SK-N-SH (cell line): ENCODE measurements at regions of chr17 and their contacts with region 1.

Region 1: DNA sequence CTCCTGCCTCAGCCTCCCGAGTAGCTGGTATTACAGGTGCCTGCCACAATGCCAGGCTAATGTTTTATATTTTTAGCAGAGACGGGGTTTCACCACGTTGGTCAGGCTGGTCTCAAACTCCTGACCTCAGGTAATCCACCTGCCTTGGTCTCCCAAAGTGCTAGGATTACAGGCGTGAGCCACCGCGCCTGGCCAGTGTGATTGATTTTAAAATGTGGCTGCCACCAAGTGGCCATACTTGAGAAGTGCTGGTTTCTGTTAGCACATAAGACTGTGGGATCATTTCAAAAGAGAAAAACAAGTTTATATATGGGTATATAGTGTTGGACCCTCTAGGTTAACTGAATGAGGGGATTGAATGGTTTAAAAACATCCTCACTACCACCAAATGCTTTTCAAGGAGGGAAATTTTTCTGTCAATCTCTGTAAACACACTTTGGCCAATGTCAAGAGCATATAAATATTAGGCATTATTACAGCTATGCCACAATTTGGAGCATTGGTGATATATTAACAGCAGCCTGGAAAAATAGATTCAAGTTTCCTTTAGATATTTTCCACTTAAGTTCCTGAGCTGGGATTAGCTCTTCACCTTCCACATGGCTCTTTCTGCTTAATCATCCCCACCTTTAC is 13.5 kb upstream of the DHRS13 start:
- DNase-seq: peak; percentile 49
- H3K4me3 ChIP-seq: peak overlapping the region in 1 of 2 experiments; percentile 33; a peak in 1 of 4 replicates
- H3K27ac ChIP-seq: no peak overlapping the region
- H3K4me1 ChIP-seq: no peaks in the 10 kb centered on the region
- H3K27me3 ChIP-seq: no peaks in the 10 kb centered on the region
- CTCF ChIP-seq: peak; percentile 71
- EP300 ChIP-seq: no peak
- RAD21 ChIP-seq: peak; percentile 62

Region 2: DNA sequence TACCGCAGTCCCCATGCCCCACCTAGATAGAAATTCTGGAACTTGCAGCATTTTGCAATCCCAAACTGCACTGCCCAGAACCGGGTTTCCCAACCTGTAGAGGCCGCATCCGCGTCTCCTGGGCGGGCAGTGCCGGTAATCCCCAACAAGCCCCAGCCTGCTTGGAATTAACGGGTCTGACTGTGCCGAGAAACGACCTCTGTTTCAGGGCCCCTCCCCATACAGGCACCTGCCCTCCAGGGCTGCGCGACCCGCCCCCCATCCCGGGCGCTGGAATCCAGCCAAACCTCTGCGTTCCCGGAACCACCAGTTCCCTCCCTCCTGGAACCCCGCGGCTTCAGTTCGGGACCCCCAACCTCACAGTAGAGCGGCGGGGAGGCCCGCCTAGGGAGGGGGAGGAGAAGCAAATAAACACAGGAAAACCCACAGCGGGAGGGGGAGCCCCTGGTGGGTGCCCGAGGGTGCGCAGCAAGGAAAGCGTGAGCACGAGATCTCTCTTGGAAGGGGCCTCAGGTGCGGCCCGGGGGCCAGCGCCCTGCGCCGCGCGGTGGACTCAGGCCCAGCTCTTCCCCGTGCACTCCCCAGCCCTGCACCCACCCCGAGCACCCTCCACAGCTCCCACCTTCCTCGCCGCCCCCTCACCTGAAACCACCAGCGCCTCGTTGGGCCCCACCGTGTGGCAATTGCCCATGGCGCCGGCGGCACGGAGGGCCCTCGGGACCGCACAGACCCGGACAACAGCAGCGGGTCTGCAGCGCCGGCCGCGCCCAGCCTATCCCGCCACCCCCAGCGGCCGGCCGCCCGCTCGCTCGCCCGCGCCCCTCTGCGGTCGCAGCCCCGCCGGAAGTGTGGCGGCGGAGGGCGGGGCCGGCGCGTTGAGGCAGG is 19.3 kb before region 1 on chr17 and contains the start of gene FLOT2:
- CTCF ChIA-PET with region 1: interaction called, 26 read pairs
- POLR2A ChIA-PET with region 1: no interaction called
- DNase-seq: peak; percentile 92
- H3K4me3 ChIP-seq: peak within 1 kb of the TSS; percentile 76 to 98
- H3K27ac ChIP-seq: peak within 1 kb of the TSS; percentile 48 to 85; a peak in 3 of 4 replicates
- H3K4me1 ChIP-seq: peaks cover 18 to 22% of the 10 kb centered on the region in 2 experiments; a peak in 2 of 4 replicates
- H3K27me3 ChIP-seq: no peaks in the 10 kb centered on the region
- CTCF ChIP-seq: peak; percentile 38
- EP300 ChIP-seq: no peak
- RAD21 ChIP-seq: 0 out of 2 replicates have a peak, but pooled peaks have one; percentile 2
- polyA plus RNA-seq, gene FLOT2: 89.8 and 105 TPM in 2 replicates

Region 3: DNA sequence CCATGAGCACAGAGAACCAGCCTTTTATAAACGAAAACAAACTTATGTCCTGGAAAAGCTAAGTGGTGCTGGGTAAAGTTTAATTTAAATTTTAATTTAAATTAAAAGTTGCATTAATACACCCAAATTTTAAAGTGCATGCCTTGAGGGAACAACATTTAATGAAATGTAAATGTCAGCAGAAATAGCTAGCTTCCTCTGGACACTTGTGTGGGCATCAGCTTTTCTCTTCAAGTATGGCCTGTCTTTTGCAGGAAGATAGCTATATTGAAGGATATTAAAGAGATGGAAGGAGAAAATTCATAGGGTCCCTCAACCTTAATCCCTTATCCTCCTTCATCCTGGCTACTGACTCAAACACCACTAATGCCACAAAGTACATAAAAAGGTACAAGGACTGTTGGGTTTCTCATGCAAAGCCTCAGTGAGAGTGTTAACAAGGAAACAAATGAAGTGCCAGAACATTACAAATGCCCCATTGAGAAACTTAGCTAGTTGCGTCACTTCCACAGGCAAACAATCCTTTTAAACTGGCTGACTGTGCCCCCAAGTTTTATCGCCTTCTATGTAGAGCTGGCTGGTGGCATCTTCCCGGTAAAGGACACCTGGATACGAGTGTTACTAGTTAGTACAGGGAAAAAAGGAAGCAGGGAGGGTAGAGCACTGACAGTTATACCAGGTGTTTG is 20.8 kb after region 1 on chr17:
- CTCF ChIA-PET with region 1: interaction called, 18 read pairs
- POLR2A ChIA-PET with region 1: no interaction called
- DNase-seq: no peak
- H3K4me3 ChIP-seq: no peak overlapping the region
- H3K27ac ChIP-seq: no peak overlapping the region
- H3K4me1 ChIP-seq: peaks cover 0 to 26% of the 10 kb centered on the region in 2 experiments; a peak in 2 of 4 replicates
- H3K27me3 ChIP-seq: no peaks in the 10 kb centered on the region
- CTCF ChIP-seq: no peak
- EP300 ChIP-seq: no peak
- RAD21 ChIP-seq: no peak

Region 4: DNA sequence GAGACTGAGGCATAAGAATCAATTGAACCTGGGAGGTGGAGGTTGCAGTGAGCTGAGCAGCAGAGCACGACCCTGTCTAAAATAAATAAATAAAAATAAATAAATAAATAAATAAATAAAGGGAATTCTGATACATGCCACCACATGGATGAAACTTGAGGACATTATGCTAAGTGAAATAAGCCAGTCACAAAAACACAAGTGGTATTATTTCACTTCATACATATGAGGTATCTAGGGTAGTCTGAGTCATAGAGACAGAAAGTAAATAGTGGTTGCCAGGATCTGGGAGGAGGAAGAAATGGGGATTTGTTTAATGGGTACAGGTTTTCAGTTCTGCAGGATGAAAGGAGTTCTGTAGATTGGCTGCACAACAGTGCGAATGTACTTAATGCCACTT is 142.9 kb after region 1 on chr17:
- CTCF ChIA-PET with region 1: no interaction called
- POLR2A ChIA-PET with region 1: no interaction called
- DNase-seq: no peak
- H3K4me3 ChIP-seq: no peak overlapping the region
- H3K27ac ChIP-seq: no peak overlapping the region
- H3K4me1 ChIP-seq: peaks cover 7 to 45% of the 10 kb centered on the region in 2 experiments; a peak in 3 of 4 replicates
- H3K27me3 ChIP-seq: no peaks in the 10 kb centered on the region
- CTCF ChIP-seq: no peak
- EP300 ChIP-seq: no peak
- RAD21 ChIP-seq: no peak